ENCODE measurements at regions of chr20 and their contacts with region 1.

Region 1: DNA sequence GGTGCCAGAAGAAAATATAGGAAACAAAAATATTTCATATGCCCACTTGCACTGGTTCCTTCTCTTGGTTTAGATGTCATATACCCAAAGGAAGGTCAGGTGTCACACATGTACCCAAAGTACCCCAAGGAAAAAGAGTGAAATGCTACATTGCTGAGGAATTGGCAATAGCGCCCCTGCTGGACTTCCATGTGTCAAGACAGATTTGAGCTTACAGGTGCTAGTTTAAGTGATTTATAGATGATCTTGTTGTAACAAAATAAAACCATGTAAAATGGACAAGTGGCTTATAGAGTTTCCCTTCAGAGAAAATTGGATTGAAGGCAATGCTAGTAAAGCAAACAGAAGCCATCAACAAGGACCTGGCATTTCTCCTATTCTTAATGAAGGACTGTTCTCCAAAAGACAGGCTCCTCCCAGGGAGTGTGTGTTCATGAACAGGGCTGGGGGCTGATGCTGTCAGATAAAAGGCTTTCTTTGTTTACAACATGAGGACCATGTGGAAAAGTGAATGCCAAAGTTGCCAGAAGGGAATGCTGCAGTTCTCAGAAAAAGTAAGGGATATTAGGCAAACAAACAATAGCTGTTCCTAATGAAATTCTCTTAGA is 64.3 kb upstream of the PAK5 start:
- DNase-seq: peak; percentile 55
- ATAC-seq: peak; percentile 74
- H3K4me3 Mint-ChIP-seq: no peak overlapping the region
- H3K27ac Mint-ChIP-seq: no peak overlapping the region
- H3K4me1 Mint-ChIP-seq: peaks cover 2% of the 10 kb centered on the region; the same call in 1 of the 2 replicates
- H3K27me3 Mint-ChIP-seq: no peaks in the 10 kb centered on the region; the same call in 1 of the 2 replicates
- CTCF ChIP-seq: peak; percentile 59

Region 2: DNA sequence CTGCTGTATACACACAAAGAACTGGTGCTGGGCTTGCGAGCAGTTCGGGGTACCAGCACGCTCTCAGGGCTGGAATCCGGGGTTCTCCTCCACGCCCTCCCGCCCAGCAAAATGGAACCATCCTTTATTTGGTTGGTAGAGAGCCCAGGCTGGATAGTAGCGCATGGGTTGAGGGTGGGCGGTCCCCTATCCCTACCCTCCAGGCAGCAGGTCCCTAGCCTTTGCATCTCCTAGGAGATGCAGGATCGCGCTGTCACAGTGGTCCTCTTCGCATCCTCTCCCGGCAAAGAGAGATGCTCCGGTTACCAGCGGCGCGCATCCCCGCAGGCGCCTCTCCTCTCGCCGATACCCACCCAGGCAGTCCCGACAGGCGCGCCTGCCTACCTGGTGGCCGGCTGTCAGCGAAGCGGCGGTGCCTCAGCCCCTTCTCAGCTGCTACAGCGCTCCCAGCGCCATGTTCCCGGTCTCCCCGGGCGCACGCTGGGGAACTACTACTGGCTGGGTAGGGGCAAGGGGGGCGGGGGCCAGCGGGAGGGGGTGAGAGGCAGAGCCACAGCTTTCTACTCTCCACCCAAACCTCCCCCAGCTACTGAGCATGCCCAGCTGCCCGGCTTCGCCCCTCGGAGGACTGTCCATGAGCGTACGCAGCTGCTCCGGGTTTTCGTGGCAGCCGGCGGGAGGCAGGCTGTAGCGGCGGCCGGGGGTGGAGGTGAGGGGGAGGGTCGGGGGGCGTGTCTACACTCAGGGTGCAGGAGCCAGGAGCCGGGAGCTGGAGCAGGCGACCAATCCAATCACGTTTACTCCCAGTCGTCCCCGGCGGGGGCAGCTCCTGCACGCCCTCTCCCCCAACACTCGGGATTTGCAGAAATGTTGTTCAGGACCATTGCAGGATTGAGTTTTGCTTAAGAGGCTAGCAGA is 64.5 kb before region 1 on chr20 and contains the start of gene PAK5:
- CTCF ChIA-PET with region 1: interaction called, 17 read pairs
- POLR2A ChIA-PET with region 1: no interaction called
- DNase-seq: peak; percentile 92
- ATAC-seq: peak; percentile 93
- H3K4me3 Mint-ChIP-seq: peak within 1 kb of the TSS; percentile 74
- H3K27ac Mint-ChIP-seq: peak within 1 kb of the TSS; percentile 61
- H3K4me1 Mint-ChIP-seq: peaks cover 13% of the 10 kb centered on the region
- H3K27me3 Mint-ChIP-seq: peaks cover 29% of the 10 kb centered on the region
- CTCF ChIP-seq: no peak
- total RNA-seq, gene PAK5: 0.31 to 0.53 TPM (median 0.48 TPM) in 3 replicates

Region 3: GRCh38 chr20:9889270-9889981 is 13.7 kb before region 1 on chr20:
- CTCF ChIA-PET with region 1: interaction called, 26 read pairs
- POLR2A ChIA-PET with region 1: no interaction called
- DNase-seq: no peak
- ATAC-seq: no peak
- H3K4me3 Mint-ChIP-seq: no peak overlapping the region
- H3K27ac Mint-ChIP-seq: no peak overlapping the region
- H3K4me1 Mint-ChIP-seq: peaks cover 11% of the 10 kb centered on the region
- H3K27me3 Mint-ChIP-seq: no peaks in the 10 kb centered on the region
- CTCF ChIP-seq: no peak

Region 4: GRCh38 chr20:9919271-9920014 is 16.3 kb after region 1 on chr20:
- CTCF ChIA-PET with region 1: interaction called, 18 read pairs
- POLR2A ChIA-PET with region 1: no interaction called
- DNase-seq: no peak
- ATAC-seq: no peak
- H3K4me3 Mint-ChIP-seq: no peak overlapping the region
- H3K27ac Mint-ChIP-seq: no peak overlapping the region
- H3K4me1 Mint-ChIP-seq: no peaks in the 10 kb centered on the region
- H3K27me3 Mint-ChIP-seq: no peaks in the 10 kb centered on the region
- CTCF ChIP-seq: no peak

Region 5: DNA sequence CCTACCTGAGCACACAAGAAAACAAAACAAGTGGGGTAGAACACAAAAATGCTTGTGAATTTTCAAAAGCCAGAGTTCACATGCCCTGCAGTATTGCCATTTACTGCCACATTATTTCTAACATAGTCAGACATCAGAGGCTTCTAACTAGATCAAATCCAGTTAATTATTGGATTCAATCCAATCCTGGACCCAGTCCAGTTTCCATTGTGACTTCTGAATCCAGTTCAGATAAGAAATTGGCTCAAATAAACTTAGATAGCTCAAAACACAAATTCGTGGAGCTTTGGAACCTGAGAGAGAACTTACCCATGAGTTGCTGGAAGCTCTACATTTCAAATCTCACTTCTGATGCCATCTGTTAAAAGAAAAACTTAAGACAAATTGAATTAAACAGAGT is 46.4 kb after region 1 on chr20:
- CTCF ChIA-PET with region 1: interaction called, 11 read pairs
- POLR2A ChIA-PET with region 1: no interaction called
- DNase-seq: no peak
- ATAC-seq: no peak
- H3K4me3 Mint-ChIP-seq: no peak overlapping the region
- H3K27ac Mint-ChIP-seq: no peak overlapping the region
- H3K4me1 Mint-ChIP-seq: no peaks in the 10 kb centered on the region
- H3K27me3 Mint-ChIP-seq: no peaks in the 10 kb centered on the region
- CTCF ChIP-seq: no peak

Region 6: GRCh38 chr20:9966966-9967365 is 63.8 kb after region 1 on chr20:
- CTCF ChIA-PET with region 1: interaction called, 12 read pairs
- POLR2A ChIA-PET with region 1: no interaction called
- DNase-seq: no peak
- ATAC-seq: peak; percentile 57; the same call in 1 of the 2 replicates
- H3K4me3 Mint-ChIP-seq: no peak overlapping the region
- H3K27ac Mint-ChIP-seq: no peak overlapping the region
- H3K4me1 Mint-ChIP-seq: peaks cover 20% of the 10 kb centered on the region
- H3K27me3 Mint-ChIP-seq: no peaks in the 10 kb centered on the region
- CTCF ChIP-seq: no peak

Region 7: GRCh38 chr20:9978397-9979004 is 75.3 kb after region 1 on chr20:
- CTCF ChIA-PET with region 1: no interaction called
- POLR2A ChIA-PET with region 1: no interaction called
- DNase-seq: no peak
- ATAC-seq: peak; percentile 84
- H3K4me3 Mint-ChIP-seq: no peak overlapping the region
- H3K27ac Mint-ChIP-seq: no peak overlapping the region
- H3K4me1 Mint-ChIP-seq: peaks cover 4% of the 10 kb centered on the region
- H3K27me3 Mint-ChIP-seq: no peaks in the 10 kb centered on the region
- CTCF ChIP-seq: peak; percentile 36; the same call in 1 of the 2 replicates

Region 8: DNA sequence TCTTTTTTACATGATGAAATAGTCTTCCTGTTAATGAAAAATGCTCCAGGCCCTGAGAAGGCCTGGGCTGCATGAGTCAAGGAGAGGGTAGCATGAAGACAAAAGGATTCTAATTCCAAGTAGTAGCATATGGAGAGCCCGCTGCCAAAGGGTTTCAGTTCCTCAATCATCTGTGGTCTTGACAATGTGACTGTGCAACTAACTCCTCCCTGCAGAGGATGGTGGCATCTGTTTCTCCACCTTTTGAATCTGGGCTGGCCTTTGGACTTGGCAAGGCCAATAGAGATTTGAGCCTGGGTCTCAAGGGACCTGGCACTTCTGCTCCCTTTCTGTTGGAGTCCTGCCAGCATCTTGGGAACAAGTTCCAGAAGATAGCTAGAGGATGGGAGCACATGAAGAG is 96.5 kb after region 1 on chr20:
- CTCF ChIA-PET with region 1: no interaction called
- POLR2A ChIA-PET with region 1: no interaction called
- DNase-seq: no peak
- ATAC-seq: no peak
- H3K4me3 Mint-ChIP-seq: no peak overlapping the region
- H3K27ac Mint-ChIP-seq: no peak overlapping the region
- H3K4me1 Mint-ChIP-seq: no peaks in the 10 kb centered on the region
- H3K27me3 Mint-ChIP-seq: no peaks in the 10 kb centered on the region
- CTCF ChIP-seq: no peak

Region 9: GRCh38 chr20:10047427-10047826 is 144.3 kb after region 1 on chr20:
- CTCF ChIA-PET with region 1: interaction called, 10 read pairs
- POLR2A ChIA-PET with region 1: no interaction called
- DNase-seq: peak; percentile 62
- ATAC-seq: peak; percentile 98
- H3K4me3 Mint-ChIP-seq: no peak overlapping the region
- H3K27ac Mint-ChIP-seq: no peak overlapping the region
- H3K4me1 Mint-ChIP-seq: no peaks in the 10 kb centered on the region
- H3K27me3 Mint-ChIP-seq: no peaks in the 10 kb centered on the region
- CTCF ChIP-seq: 0 out of 2 replicates have a peak, but pooled peaks have one; percentile 36